Mammary epithelial cell (primary cell): ENCODE measurements at regions of chr1 and their contacts with region 1.

Region 1: DNA sequence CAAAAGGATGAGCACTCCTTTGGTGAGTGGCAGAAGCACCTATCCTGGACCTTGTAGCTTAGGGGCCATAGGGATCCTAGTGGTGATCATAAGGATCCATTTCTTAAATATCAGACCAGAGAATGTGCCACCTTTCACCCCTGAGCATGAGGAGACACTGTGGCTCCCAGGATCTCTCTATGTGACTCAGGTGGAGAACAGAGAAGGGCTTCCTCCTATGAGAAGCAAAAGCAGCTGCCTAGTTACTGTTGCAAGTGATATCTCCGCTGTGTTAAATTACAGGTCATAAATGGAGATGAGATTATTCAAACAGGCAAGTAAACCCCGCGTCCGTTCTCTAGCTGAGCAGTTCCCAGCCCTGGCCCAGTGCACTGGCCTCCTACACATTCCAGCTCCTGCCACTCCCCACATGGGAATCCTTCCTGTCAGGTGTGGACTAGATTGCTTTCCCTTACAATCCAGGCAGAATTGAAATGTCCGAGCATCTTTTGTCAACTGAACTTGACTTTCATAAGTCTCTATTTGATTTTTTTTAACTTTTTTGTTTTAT is 26.3 kb downstream of the CLEC20A start:
- DNase-seq: peak; percentile 6
- H3K4me3 ChIP-seq: no peak overlapping the region
- H3K27ac ChIP-seq: peak overlapping the region; percentile 22
- H3K4me1 ChIP-seq: peaks cover 7% of the 10 kb centered on the region
- H3K27me3 ChIP-seq: no peaks in the 10 kb centered on the region
- CTCF ChIP-seq: no peak

Region 2: DNA sequence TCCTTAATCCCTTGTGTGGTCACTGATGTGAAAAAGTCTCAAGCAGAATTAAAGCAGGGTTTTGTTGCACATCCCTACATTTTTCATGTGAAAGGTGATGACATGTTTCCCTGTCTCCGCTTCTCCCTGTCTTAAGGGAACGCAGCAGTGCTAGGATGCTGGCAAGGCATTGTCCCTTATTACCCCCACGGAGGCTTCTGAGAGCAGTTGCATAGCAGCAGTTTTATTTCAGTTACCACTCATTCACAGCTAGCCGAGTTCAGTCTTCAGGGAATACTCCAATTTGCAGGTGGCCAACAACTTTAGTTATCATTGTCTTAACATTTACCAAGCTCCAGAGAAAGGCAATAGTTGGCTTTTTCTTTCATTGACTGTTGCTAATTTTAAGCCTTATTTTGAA is 62.8 kb before region 1 on chr1:
- CTCF ChIA-PET with region 1: no interaction called
- dilution Hi-C with region 1: loop called (anchors 5 kb)
- in situ Hi-C with region 1: no loop called
- intact Hi-C with region 1: no loop called
- DNase-seq: no peak
- H3K4me3 ChIP-seq: no peak overlapping the region
- H3K27ac ChIP-seq: no peak overlapping the region
- H3K4me1 ChIP-seq: no peaks in the 10 kb centered on the region
- H3K27me3 ChIP-seq: no peaks in the 10 kb centered on the region
- CTCF ChIP-seq: no peak

Region 3: GRCh38 chr1:178438432-178438831 is 32.1 kb before region 1 on chr1:
- CTCF ChIA-PET with region 1: no interaction called
- dilution Hi-C with region 1: no loop called
- in situ Hi-C with region 1: no loop called
- intact Hi-C with region 1: no loop called
- DNase-seq: peak; percentile 47
- H3K4me3 ChIP-seq: no peak overlapping the region
- H3K27ac ChIP-seq: peak overlapping the region; percentile 7
- H3K4me1 ChIP-seq: peaks cover 13% of the 10 kb centered on the region
- H3K27me3 ChIP-seq: no peaks in the 10 kb centered on the region
- CTCF ChIP-seq: no peak

Region 4: DNA sequence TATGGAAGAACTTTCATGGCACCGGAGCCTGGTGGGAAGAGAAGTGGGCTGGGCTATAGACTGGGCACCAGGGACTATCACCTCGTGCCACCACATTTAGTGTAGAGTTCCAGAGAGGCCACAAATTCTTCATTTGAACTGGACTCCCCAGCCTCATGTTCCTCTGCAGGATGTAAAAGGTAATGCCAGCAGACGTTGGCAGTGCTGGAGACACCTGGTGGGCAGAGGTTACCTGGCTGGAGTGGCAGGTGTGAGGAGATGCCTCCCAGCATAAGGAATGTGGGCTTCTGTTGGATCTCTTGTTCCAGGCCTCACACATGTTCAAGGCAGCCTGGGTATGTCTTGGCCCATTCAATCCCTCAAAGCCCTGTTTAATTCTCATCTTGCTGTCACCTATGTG is 77.6 kb after region 1 on chr1:
- CTCF ChIA-PET with region 1: no interaction called
- dilution Hi-C with region 1: no loop called
- in situ Hi-C with region 1: no loop called
- intact Hi-C with region 1: no loop called
- DNase-seq: no peak
- H3K4me3 ChIP-seq: no peak overlapping the region
- H3K27ac ChIP-seq: no peak overlapping the region
- H3K4me1 ChIP-seq: peaks cover 4% of the 10 kb centered on the region
- H3K27me3 ChIP-seq: no peaks in the 10 kb centered on the region
- CTCF ChIP-seq: peak in 1 of 2 donors; percentile 18